Activated CD4-positive, alpha-beta memory T cell treated with anti-CD3 and anti-CD28 coated beads for 36 hours (primary cell): ENCODE measurements at regions of chr6 and their contacts with region 1.

Region 1: GRCh38 chr6:30130887-30131862 is 4.8 kb upstream of the TRIM40 start:
- DNase-seq: peak; percentile 73
- H3K4me3 Mint-ChIP-seq: peak overlapping the region; percentile 9
- H3K27ac Mint-ChIP-seq: no peak overlapping the region
- H3K4me1 Mint-ChIP-seq: peaks cover 30% of the 10 kb centered on the region
- H3K27me3 Mint-ChIP-seq: peaks cover 60% of the 10 kb centered on the region

Region 2: GRCh38 chr6:29847871-29848630 is 283.1 kb before region 1 on chr6:
- CTCF ChIA-PET with region 1: interaction called, 16 read pairs
- POLR2A ChIA-PET with region 1: no interaction called
- intact Hi-C with region 1: no loop called
- DNase-seq: peak; percentile 90
- H3K4me3 Mint-ChIP-seq: no peak overlapping the region
- H3K27ac Mint-ChIP-seq: peak overlapping the region; percentile 44
- H3K4me1 Mint-ChIP-seq: peaks cover 25% of the 10 kb centered on the region
- H3K27me3 Mint-ChIP-seq: peaks cover 31% of the 10 kb centered on the region

Region 3: DNA sequence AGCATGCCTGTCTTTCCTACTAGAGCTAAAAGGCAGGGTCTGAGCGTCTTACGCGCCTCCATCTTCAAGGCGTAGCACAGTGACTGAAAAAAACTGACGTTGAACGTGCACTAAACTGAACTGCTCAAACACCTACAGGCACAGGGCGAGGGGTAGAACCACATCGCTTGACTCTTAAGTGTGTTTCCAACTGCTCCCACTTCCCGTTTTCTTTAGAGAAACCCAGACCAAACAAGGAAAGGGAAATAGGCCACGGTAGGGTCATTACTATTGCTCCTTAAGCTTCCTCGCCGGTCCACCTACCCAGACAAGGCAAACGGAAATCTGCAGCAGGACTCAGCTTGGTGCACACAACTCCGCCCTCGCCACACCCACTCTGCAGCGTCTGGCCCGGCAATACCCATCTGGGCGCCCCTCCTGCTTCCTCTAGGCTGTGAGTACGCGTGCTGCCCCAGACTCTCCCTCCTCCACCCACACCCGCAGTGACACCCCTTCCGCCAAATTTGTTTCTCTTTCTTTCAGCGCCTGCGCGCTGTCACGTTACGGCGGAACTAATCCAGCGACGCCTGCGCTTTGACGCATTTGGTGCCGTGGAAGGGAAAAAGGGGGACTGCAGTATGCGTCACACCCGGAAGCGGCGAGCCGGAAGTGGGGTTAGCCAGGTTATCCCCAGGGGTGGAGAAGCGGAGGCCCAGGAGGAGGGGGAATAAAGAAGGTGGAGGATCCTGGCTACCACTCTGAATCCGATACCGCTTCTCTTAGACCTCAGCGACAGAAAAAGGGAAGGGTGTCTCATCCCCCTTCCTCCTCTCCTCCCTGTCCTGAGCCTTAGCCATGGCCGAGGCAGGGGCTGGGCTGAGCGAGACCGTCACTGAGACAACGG is 64.4 kb before region 1 on chr6 and contains the start of gene PPP1R11:
- CTCF ChIA-PET with region 1: interaction called, 18 read pairs
- POLR2A ChIA-PET with region 1: no interaction called
- intact Hi-C with region 1: loop called (anchors 5 kb)
- DNase-seq: peak; percentile 100
- H3K4me3 Mint-ChIP-seq: peak within 1 kb of the TSS; percentile 88
- H3K27ac Mint-ChIP-seq: peak within 1 kb of the TSS; percentile 95
- H3K4me1 Mint-ChIP-seq: peaks cover 50% of the 10 kb centered on the region
- H3K27me3 Mint-ChIP-seq: peaks cover 8% of the 10 kb centered on the region
- total RNA-seq, gene PPP1R11: 51.3 to 55.0 TPM

Region 4: GRCh38 chr6:30092852-30093543 is 38.2 kb before region 1 on chr6:
- CTCF ChIA-PET with region 1: interaction called, 15 read pairs
- POLR2A ChIA-PET with region 1: no interaction called
- intact Hi-C with region 1: no loop called
- DNase-seq: no peak
- H3K4me3 Mint-ChIP-seq: no peak overlapping the region
- H3K27ac Mint-ChIP-seq: no peak overlapping the region
- H3K4me1 Mint-ChIP-seq: peaks cover 9% of the 10 kb centered on the region
- H3K27me3 Mint-ChIP-seq: peaks cover 33% of the 10 kb centered on the region

Region 5: DNA sequence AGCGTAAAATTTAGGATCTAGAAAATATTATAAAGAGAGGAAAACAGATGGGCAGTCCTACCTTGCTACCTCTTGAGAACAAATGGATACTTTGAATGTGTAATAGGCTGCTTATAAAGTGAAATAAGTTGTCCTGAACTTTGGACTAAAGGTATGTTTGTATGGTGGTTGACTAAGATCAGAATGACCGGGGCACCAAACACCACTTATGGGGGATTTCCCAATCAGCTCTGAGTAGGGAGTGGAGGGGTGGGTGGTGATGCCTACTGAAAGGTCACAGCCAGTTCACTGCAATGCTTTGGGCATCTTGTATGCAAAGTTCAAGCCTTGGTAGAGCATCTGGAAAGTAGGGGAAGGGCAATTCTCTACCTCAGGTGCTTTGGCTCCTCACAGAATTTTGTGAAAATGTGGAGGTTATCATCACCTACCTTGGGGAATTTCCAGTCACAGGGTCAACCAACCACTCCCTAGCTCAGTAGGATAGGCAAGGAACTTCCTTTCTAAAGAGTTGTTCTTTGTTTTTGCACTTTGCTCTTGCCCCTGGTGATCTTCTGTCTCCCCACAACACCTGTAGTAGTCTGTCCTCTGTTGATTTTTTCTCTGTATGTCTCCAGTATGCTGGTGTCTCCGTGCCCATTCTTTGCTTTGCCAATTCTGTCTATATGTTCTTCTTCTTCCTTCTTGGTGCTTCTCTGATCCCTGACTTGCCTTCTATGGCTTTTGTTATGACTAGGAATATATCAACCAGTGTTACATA is 18.0 kb before region 1 on chr6 and contains the start of gene TRIM31:
- CTCF ChIA-PET with region 1: interaction called, 491 read pairs
- POLR2A ChIA-PET with region 1: interaction called, 3 read pairs
- intact Hi-C with region 1: loop called (anchors 2 kb)
- DNase-seq: peak; percentile 21
- H3K4me3 Mint-ChIP-seq: no peak within 1 kb of the TSS
- H3K27ac Mint-ChIP-seq: no peak within 1 kb of the TSS
- H3K4me1 Mint-ChIP-seq: peaks cover 17% of the 10 kb centered on the region
- H3K27me3 Mint-ChIP-seq: peaks cover 32% of the 10 kb centered on the region
- total RNA-seq, gene TRIM31: not detected

Region 6: DNA sequence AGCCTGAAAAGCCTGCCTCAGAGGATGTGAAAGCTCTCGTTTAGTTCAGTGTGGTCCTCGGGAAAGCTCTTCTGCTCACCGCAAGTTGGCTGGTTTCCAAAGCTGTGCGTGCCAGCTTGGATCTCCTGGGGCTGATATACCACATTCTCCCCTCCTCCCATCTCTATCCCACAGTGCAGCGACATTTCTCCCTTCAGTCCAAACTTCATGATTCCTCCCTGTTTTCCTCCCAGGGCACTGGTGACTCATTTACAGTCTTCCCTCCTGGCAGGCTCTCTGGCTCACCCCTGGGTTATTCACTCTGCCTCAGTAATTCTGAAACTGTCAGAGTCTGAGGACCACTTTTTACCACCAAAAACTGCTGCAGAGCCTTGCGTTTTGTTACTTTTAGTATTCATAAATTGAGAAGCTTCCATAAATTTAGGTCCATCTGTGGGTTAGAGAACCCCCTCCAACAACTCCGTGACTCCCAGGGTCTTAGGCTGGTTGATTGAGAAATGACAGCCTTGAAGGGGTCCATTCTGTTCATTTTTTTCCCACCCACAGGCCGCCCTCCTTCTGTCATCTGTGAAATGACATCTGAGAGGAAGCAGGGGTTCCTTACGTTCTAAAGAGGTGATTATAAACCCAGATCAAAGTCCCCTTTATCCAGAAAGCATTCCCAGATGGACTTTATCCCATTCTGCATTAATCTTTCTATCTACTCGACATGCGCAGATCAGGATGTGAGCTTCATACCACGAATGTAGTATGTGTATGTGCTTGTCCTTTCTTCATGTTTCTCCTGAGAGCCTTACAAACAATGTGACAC is 23.7 kb after region 1 on chr6:
- CTCF ChIA-PET with region 1: interaction called, 65 read pairs
- POLR2A ChIA-PET with region 1: no interaction called
- intact Hi-C with region 1: loop called (anchors 2 kb)
- DNase-seq: no peak
- H3K4me3 Mint-ChIP-seq: no peak overlapping the region
- H3K27ac Mint-ChIP-seq: no peak overlapping the region
- H3K4me1 Mint-ChIP-seq: peaks cover 22% of the 10 kb centered on the region
- H3K27me3 Mint-ChIP-seq: peaks cover 20% of the 10 kb centered on the region

Region 7: DNA sequence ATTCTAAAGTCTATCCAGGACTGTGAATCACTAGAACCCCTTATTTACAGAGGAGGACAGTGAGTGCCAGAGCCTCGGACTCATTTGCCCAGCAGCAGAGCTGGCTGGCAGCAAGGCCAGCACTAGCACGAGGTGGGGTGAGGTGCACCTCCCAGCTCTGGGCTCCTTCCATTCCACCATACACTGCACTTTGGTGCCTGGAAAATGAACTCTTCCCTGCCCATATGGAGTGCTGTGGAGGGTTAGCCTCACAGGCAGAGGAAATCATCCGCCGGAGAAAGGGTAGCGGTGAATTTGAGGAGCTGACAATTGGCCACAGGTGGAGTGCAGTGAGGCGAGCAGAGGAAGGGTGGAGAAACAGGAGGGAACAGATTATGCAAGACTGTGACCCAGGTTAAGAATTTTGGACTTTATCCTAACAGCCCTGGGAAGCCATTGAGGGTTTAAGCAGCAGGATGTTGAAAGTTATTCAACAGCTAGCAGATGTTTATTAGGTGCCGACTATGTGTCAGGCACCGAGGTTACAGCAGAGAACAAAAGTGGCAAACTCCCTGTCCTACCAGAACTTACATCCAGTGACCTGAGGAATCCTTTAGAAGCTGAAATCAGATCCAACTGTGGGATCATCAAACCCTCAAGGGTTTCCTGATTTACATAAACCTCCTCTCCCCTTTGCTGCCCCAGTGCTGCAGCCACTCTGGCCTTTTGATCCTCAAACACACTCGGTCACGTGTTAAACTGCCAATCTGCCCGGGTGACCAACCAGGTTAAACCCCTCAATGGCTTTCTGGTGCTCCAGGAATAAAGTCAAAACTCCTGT is 75.8 kb after region 1 on chr6:
- CTCF ChIA-PET with region 1: interaction called, 11 read pairs
- POLR2A ChIA-PET with region 1: no interaction called
- intact Hi-C with region 1: no loop called
- DNase-seq: no peak
- H3K4me3 Mint-ChIP-seq: no peak overlapping the region
- H3K27ac Mint-ChIP-seq: no peak overlapping the region
- H3K4me1 Mint-ChIP-seq: peaks cover 73% of the 10 kb centered on the region
- H3K27me3 Mint-ChIP-seq: no peaks in the 10 kb centered on the region